ENCODE measurements at regions of chr12 and their contacts with region 1.

Region 1: GRCh38 chr12:15789220-15790171 is at the start of gene EPS8:
- DNase-seq: peak; percentile 96
- H3K4me3 ChIP-seq: peak within 1 kb of the TSS; percentile 68 to 96 (median 84)
- H3K27ac ChIP-seq: peak within 1 kb of the TSS; percentile 86 to 94 (median 93)
- H3K4me1 ChIP-seq: peaks cover 0 to 27% (median 17%) of the 10 kb centered on the region in 4 donors
- H3K27me3 ChIP-seq: no peaks in the 10 kb centered on the region
- CTCF ChIP-seq: peak in 2 of 3 experiments; percentile 6 to 15
- EP300 ChIP-seq: no peak
- POLR2A ChIP-seq: peak; percentile 54
- total RNA-seq, gene EPS8: 54.4 to 120 (median 78.7) TPM

Region 2: DNA sequence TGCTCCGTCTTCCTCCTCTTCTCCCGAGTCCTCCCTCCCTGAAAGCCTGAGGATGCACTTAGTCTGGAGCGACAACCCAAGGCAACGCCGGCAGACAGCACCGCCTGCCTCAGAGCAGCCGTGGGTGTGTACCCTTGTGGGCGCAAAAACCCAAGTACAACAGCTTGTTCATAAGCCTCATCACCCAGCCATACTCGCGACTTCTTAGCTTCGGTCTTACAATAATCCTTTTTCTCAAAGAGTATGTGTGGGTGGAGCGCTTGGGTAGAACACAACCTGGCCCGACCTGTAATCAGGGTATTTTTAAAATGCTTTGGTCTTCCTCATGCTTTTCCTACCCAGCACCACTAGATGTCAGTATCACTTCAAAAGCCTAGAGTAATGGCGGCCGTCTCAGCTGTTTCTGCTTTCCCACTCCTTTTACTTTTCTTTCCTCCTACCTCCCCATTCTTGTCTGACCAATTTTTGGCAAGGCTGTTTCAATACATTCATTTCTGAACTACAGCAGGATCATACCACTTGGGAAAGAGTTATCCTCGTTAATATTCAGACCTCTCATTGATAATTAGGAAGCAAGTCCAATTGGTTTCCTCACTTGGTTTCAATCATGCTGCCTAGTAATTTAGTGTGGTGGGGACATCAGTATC is 199.2 kb before region 1 on chr12:
- intact Hi-C with region 1: loop called (anchors 5 kb)
- DNase-seq: peak; percentile 68
- H3K4me3 ChIP-seq: peak overlapping the region; percentile 37 to 53 (median 40)
- H3K27ac ChIP-seq: no peak overlapping the region
- H3K4me1 ChIP-seq: peaks cover 4 to 9% (median 7%) of the 10 kb centered on the region in 4 donors
- H3K27me3 ChIP-seq: peaks cover 0 to 9% (median 0%) of the 10 kb centered on the region in 4 donors
- CTCF ChIP-seq: peak; percentile 91 to 93 (median 91)
- EP300 ChIP-seq: no peak
- POLR2A ChIP-seq: no peak

Region 3: DNA sequence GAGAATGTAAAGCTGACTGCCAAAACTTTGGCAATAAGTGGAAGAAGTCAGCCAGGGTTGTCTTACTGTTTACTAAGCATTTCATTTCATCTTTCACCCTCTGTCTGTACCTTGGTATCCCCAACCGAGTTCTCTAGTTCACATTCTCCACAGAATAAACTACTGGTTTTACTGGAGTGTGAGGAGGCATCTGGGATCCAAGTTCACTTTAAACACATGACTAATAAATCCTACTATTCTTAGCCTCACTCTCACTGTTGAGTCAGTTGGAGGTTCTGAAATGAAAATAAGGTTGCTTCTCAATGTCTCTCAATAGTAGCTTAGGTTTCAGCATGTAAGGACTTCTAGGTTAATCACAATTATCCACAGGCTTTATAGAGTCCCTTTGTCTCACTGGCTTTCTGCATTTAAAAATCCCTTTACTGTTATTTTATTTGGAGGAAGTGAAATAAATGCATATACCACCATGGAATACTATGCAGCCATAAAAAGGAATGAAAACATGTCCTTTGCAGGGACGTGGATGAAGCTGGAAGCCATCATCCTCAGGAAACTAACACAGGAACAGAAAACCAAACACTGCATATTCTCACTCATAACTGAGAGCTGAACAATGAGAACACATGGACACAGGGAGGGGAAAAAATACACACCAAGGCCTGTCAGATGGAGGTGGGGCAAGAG is 96.1 kb before region 1 on chr12:
- intact Hi-C with region 1: loop called (anchors 5 kb)
- DNase-seq: no peak
- H3K4me3 ChIP-seq: no peak overlapping the region
- H3K27ac ChIP-seq: peak overlapping the region; percentile 45 to 76 (median 69)
- H3K4me1 ChIP-seq: peaks cover 10 to 68% (median 64%) of the 10 kb centered on the region in 4 donors
- H3K27me3 ChIP-seq: no peaks in the 10 kb centered on the region
- CTCF ChIP-seq: no peak
- EP300 ChIP-seq: no peak
- POLR2A ChIP-seq: no peak

Region 4: GRCh38 chr12:15728118-15728598 is 61.3 kb before region 1 on chr12:
- intact Hi-C with region 1: loop called (anchors 5 kb)
- DNase-seq: no peak
- H3K4me3 ChIP-seq: no peak overlapping the region
- H3K27ac ChIP-seq: no peak overlapping the region
- H3K4me1 ChIP-seq: peaks cover 0 to 51% (median 34%) of the 10 kb centered on the region in 4 donors
- H3K27me3 ChIP-seq: no peaks in the 10 kb centered on the region
- CTCF ChIP-seq: no peak
- EP300 ChIP-seq: no peak
- POLR2A ChIP-seq: no peak

Region 5: DNA sequence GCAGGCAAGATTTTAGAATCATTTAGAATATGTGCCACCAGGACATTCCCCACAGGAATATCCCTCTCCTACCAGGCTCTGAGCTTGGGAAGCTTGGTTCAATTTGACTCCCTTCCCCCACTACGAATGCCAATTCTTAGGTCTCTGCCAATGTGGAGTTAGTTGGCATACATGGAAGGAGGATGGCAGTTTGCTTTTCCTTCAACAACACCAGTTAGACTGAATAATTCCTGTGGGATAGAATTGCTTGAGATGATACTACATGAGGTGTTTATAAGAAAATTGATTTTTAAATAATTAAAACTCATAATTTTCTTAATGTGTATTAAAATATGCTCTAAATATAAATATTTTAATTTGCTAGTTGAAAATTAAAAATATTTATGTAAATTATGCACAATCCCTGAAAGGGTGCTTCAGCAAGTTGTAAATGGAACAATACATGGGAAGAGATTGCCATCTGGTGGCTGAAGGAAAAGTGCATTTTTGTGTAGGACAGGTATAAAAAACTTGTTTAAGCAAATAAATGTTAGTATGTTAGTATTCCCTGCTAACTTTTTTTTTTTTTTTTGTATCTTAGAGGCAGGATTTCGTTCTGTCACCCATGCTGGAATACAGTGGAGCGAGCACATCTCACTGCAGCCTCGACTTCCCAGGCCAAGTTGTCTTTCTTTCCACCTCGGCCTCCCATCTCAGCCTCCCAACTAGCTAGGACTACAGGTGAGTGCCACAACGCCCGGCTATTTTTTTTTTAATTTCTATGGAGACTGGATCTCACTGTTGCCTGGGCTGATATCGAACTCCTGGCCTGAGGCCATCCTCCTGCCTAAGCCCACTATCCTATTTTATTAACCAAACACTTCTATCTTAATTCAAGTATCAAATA is 66.8 kb after region 1 on chr12:
- intact Hi-C with region 1: loop called (anchors 10 kb)
- DNase-seq: no peak
- H3K4me3 ChIP-seq: no peak overlapping the region
- H3K27ac ChIP-seq: no peak overlapping the region
- H3K4me1 ChIP-seq: peaks cover 0 to 7% (median 0%) of the 10 kb centered on the region in 4 donors
- H3K27me3 ChIP-seq: no peaks in the 10 kb centered on the region
- CTCF ChIP-seq: peak; percentile 77 to 85 (median 78)
- EP300 ChIP-seq: no peak
- POLR2A ChIP-seq: no peak

Measured in esophagus muscularis mucosa (tissue), 4 donors.